HepG2 (cell line): ENCODE measurements at regions of chr11 and their contacts with region 1.

Region 1: DNA sequence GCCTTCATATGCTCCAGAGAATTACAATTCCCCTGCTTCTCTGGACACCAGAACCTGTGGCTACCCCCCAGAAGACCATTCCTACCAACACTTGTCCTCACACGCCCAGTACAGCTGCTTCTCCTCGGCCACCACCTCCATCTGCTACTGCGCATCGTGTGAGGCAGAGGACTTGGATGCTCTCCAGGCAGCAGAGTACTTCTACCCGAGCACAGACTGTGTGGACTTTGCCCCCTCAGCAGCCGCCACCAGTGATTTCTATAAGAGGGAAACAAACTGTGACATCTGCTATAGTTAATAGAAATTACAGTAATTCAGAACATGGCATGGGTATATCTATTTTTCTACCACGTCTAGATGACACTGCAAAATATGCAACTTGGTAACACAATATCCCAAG is 9.8 kb downstream of the POU2AF3 start:
- DNase-seq: peak; percentile 78
- ATAC-seq: peak; percentile 92
- H3K4me3 ChIP-seq: no peak overlapping the region
- H3K27ac ChIP-seq: no peak overlapping the region
- H3K4me1 ChIP-seq: peaks cover 77% of the 10 kb centered on the region
- H3K27me3 ChIP-seq: no peaks in the 10 kb centered on the region
- CTCF ChIP-seq: peak; percentile 56
- EP300 ChIP-seq: no peak
- POLR2A ChIP-seq: 0 out of 4 replicates have a peak, but pooled peaks of 1 of the 2 experiments have one; percentile 36
- RAD21 ChIP-seq: peak; percentile 40; the same call in 1 of the 2 replicates

Region 2: DNA sequence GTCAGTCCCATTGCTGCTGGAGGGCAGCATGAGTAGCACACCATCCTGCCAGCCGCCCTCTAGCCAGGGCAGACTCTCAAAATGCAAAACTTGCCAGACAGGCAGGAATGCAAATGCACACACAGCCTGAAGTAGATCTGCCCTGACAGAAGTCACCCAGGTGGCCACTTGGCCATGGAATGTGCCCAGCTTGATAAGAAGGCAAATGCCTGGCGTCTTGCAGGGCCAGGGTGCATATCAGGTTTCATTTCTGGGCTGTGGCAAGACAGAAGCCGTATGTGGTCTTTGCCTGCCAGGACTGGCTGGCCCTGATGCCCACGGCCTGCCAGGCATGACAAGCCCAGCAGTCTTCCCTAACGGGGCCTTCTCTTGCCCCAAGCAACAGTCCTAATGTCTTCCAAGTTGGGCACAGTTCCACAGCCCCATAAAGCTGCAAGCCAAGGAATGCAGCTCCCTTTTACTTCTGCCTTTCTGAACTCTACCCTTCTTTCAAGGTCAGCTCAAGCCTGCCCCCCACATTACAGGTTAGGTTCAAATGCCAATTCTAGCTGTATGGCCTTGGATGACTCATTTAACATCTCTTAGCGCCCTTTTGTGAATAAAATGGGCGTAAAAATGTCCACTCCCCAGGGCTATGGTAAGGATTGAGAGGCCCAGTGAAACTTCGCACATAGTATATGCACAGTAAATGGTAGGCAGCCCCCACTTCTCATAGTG is 19.9 kb after region 1 on chr11:
- CTCF ChIA-PET with region 1: no interaction called
- POLR2A ChIA-PET with region 1: interaction called, 102 read pairs
- in situ Hi-C with region 1: no loop called
- intact Hi-C with region 1: loop called (anchors 2 kb)
- DNase-seq: no peak
- ATAC-seq: no peak
- H3K4me3 ChIP-seq: no peak overlapping the region
- H3K27ac ChIP-seq: no peak overlapping the region
- H3K4me1 ChIP-seq: peaks cover 68% of the 10 kb centered on the region
- H3K27me3 ChIP-seq: no peaks in the 10 kb centered on the region
- CTCF ChIP-seq: no peak
- EP300 ChIP-seq: no peak
- POLR2A ChIP-seq: no peak
- RAD21 ChIP-seq: no peak

Region 3: DNA sequence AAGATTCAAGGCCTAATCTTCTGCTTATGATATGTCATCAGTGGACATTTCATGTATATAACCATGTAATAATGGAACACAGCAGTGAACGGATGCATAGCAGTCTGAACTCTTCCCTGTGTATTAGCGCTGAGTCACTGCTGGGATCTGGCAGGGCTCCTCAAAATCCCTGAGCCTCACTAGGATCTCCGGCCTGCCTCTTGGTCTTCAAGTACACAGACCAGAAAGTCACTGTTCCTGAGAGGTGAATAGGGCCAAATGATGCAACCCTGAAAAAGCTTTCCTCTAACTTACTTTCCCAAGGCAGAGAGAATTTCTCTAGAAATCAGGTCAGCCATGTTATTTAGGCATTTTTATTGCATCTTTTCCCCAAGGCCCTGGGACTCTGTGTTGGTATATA is 35.9 kb after region 1 on chr11:
- CTCF ChIA-PET with region 1: no interaction called
- POLR2A ChIA-PET with region 1: no interaction called
- in situ Hi-C with region 1: no loop called
- intact Hi-C with region 1: no loop called
- DNase-seq: no peak
- ATAC-seq: no peak
- H3K4me3 ChIP-seq: no peak overlapping the region
- H3K27ac ChIP-seq: no peak overlapping the region
- H3K4me1 ChIP-seq: peaks cover 16% of the 10 kb centered on the region
- H3K27me3 ChIP-seq: no peaks in the 10 kb centered on the region
- CTCF ChIP-seq: no peak
- EP300 ChIP-seq: no peak
- POLR2A ChIP-seq: no peak
- RAD21 ChIP-seq: no peak